Activated T-helper 2 cell treated with anti-CD3 and anti-CD28 coated beads, Interferon-gamma antibody, Interleukin-2, Interleukin-4, amounts not matched to agents 10 μg/mL and 5 μg/mL and 100 μg/mL, durations not matched to agents 14 hours and 24 hours and 36 hours (primary cell): ENCODE measurements at regions of chr19 and their contacts with region 1.

Region 1: GRCh38 chr19:44071824-44072542 is at the start of gene ZNF284:
- DNase-seq: peak; percentile 77
- H3K4me3 Mint-ChIP-seq: peak within 1 kb of the TSS; percentile 85
- H3K27ac Mint-ChIP-seq: peak within 1 kb of the TSS; percentile 50
- H3K4me1 Mint-ChIP-seq: peaks cover 17% of the 10 kb centered on the region
- H3K27me3 Mint-ChIP-seq: no peaks in the 10 kb centered on the region
- total RNA-seq, gene ZNF284: 1.1 and 1.4 TPM in 2 replicates

Region 2: GRCh38 chr19:43983912-43984686 is 87.9 kb before region 1 on chr19 and contains the start of gene ZNF155:
- intact Hi-C with region 1: loop called (anchors 5 kb)
- DNase-seq: peak; percentile 59
- H3K4me3 Mint-ChIP-seq: peak within 1 kb of the TSS; percentile 95
- H3K27ac Mint-ChIP-seq: peak within 1 kb of the TSS; percentile 90
- H3K4me1 Mint-ChIP-seq: peaks cover 9% of the 10 kb centered on the region
- H3K27me3 Mint-ChIP-seq: no peaks in the 10 kb centered on the region
- total RNA-seq, gene ZNF155: 4.7 and 5.5 TPM in 2 replicates

Region 3: DNA sequence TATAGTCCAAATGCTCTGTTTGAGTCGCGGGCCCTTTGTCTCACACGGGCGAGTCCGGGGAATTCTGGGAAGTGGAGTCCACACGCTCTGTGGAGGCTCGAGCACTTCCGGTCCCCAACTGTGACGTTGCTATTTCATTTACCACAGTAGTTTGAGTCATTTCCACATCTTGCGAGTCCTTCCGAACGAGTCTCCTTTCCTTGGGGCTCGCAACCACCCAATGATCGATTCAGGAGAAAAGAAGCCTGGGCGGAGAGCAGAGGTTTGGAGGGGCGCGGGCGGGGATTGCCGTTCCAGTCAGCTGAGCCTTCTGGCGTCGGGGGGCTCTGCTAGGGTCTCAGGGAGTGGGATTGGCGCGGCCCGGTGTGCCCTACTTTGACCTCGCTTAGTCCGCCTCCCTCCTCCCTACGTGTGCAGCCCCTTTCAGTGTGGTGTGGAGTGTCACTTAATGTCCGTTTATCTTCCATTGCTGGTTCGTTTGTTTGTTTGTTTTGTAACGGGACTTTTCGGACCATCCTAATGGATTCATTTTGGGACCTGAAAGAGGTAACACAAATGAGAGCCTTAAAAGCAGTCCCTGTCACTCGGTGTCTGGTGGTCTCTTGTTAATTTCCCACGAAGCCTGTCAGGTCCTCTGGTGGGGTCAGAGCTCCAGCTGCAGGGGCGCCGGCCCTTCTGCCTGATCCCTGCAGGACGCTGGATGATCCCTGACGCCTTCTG is 46.6 kb before region 1 on chr19 and contains the start of gene ZNF222:
- intact Hi-C with region 1: loop called (anchors 1 kb)
- DNase-seq: peak; percentile 74
- H3K4me3 Mint-ChIP-seq: peak within 1 kb of the TSS; percentile 95
- H3K27ac Mint-ChIP-seq: peak within 1 kb of the TSS; percentile 70
- H3K4me1 Mint-ChIP-seq: peaks cover 15% of the 10 kb centered on the region
- H3K27me3 Mint-ChIP-seq: no peaks in the 10 kb centered on the region
- total RNA-seq, gene ZNF222: 0.99 and 1.8 TPM in 2 replicates

Region 4: GRCh38 chr19:44055870-44056269 is 16.1 kb before region 1 on chr19:
- intact Hi-C with region 1: no loop called
- DNase-seq: no peak
- H3K4me3 Mint-ChIP-seq: no peak overlapping the region
- H3K27ac Mint-ChIP-seq: no peak overlapping the region
- H3K4me1 Mint-ChIP-seq: peaks cover 6% of the 10 kb centered on the region
- H3K27me3 Mint-ChIP-seq: no peaks in the 10 kb centered on the region

Region 5: GRCh38 chr19:44113138-44113783 is 41.3 kb after region 1 on chr19 and contains the start of gene ZNF225:
- intact Hi-C with region 1: no loop called
- DNase-seq: peak; percentile 81
- H3K4me3 Mint-ChIP-seq: peak within 1 kb of the TSS; percentile 99
- H3K27ac Mint-ChIP-seq: peak within 1 kb of the TSS; percentile 82
- H3K4me1 Mint-ChIP-seq: peaks cover 14% of the 10 kb centered on the region
- H3K27me3 Mint-ChIP-seq: no peaks in the 10 kb centered on the region
- total RNA-seq, gene ZNF225: 3.5 and 3.6 TPM in 2 replicates

Region 6: DNA sequence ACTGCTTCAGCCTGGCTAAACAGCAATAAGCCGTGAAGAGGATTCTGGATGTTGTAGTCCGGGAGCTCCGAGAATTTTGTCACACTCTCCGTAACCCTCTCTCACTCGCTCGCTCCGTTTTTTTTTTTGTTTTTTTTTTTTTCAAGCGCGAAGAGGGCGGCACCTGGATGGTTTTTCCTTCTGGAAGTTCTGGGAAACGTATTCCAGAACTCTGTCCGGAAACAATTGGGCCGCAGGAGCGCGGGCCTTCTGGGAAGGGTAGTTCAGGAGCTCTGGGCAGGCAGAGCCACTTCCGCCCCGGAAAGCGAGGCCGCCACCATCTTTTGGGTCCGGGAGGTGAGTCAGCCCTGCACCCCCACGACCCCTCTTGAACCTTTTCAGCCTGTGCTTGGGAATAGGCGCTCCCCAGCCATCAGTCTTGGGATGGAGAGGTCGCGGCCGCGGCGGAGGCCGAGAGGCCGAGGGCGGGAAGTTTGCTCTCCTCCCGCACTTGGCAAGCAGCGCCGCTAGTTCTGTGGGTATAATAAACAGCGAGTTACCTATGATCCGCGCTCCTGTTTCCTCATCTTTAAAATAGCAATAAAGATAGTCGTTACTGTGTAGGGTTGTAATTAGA is 140.4 kb after region 1 on chr19 and contains the start of gene ZNF227:
- intact Hi-C with region 1: loop called (anchors 5 kb)
- DNase-seq: peak; percentile 70
- H3K4me3 Mint-ChIP-seq: peak within 1 kb of the TSS; percentile 92
- H3K27ac Mint-ChIP-seq: peak within 1 kb of the TSS; percentile 85
- H3K4me1 Mint-ChIP-seq: peaks cover 16% of the 10 kb centered on the region
- H3K27me3 Mint-ChIP-seq: no peaks in the 10 kb centered on the region
- total RNA-seq, gene ZNF227: 17.6 and 17.7 TPM in 2 replicates

Region 7: DNA sequence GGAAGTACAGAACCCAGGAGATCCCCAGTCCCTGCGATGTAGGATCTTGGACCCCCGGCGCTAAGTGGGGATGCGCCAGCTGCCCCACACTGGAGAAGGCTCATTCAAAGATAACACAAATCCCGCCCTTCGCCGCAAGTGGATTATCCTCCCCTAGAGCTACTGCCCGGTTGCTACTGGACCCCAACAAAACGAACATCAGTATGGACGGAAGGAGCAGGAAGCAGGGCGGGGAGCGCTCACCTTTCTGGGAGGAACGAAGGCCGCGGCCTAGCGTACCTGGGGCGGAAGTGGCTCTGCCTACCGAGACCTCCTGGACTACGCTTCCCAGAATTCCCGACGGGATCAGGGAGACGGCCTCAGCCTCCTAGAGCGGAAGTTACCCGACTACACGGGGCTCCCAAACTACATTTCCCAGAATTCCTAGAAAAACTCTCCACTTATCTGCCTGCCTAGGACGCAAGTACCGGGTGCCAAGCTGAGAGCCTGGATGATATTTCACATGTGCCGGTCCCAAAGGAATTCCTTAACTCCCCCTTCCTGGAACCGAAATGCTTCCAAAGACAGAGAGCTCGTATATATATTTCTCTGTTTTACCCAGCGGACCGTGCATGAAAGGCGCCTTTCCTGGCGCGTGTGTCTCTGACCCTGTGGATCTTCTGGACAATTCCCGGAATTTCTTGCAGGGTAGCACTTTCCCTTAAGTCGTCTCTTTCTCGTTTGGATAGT is 284.6 kb after region 1 on chr19 and contains the start of gene ZNF112:
- intact Hi-C with region 1: no loop called
- DNase-seq: no peak
- H3K4me3 Mint-ChIP-seq: no peak within 1 kb of the TSS
- H3K27ac Mint-ChIP-seq: no peak within 1 kb of the TSS
- H3K4me1 Mint-ChIP-seq: no peaks in the 10 kb centered on the region
- H3K27me3 Mint-ChIP-seq: no peaks in the 10 kb centered on the region
- total RNA-seq, gene ZNF112: not detected in 2 replicates